ENCODE measurements at regions of chr3 and their contacts with region 1.

Region 1: GRCh38 chr3:119463171-119464169 is at the start of gene TMEM39A:
- DNase-seq: peak; percentile 98
- H3K4me3 Mint-ChIP-seq: peak within 1 kb of the TSS; percentile 98
- H3K27ac Mint-ChIP-seq: peak within 1 kb of the TSS; percentile 97
- H3K4me1 Mint-ChIP-seq: peaks cover 49% of the 10 kb centered on the region
- H3K27me3 Mint-ChIP-seq: peaks cover 3% of the 10 kb centered on the region
- total RNA-seq, gene TMEM39A: 51.3 and 56.9 TPM in 2 replicates

Region 2: GRCh38 chr3:119261055-119261454 is 202.4 kb before region 1 on chr3:
- intact Hi-C with region 1: no loop called
- DNase-seq: no peak
- H3K4me3 Mint-ChIP-seq: no peak overlapping the region
- H3K27ac Mint-ChIP-seq: no peak overlapping the region
- H3K4me1 Mint-ChIP-seq: peaks cover 14% of the 10 kb centered on the region
- H3K27me3 Mint-ChIP-seq: peaks cover 17% of the 10 kb centered on the region

Region 3: DNA sequence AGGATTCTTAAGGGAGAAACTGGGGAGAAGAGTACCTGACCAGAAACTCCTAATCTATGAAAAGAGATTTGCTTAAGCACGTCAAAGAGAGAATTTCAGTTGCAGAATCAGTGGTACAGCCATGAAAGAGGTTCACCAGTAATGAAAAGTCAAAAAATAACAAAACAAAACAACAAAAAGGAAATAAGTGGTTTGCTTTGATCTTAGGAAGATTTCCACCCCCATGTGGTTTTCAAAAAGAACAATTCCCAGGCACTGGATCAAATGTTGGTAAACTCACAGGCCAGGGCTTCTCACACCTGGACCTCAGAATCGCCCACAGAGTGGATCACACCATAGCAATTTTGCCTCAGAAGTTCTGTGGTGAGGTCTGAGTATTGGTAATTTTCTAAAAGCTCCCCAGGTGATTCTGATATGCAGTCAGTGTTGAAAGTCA is 67.5 kb before region 1 on chr3:
- intact Hi-C with region 1: loop called (anchors 2 kb)
- DNase-seq: peak; percentile 2
- H3K4me3 Mint-ChIP-seq: no peak overlapping the region
- H3K27ac Mint-ChIP-seq: peak overlapping the region; percentile 63
- H3K4me1 Mint-ChIP-seq: peaks cover 36% of the 10 kb centered on the region
- H3K27me3 Mint-ChIP-seq: peaks cover 9% of the 10 kb centered on the region

Region 4: DNA sequence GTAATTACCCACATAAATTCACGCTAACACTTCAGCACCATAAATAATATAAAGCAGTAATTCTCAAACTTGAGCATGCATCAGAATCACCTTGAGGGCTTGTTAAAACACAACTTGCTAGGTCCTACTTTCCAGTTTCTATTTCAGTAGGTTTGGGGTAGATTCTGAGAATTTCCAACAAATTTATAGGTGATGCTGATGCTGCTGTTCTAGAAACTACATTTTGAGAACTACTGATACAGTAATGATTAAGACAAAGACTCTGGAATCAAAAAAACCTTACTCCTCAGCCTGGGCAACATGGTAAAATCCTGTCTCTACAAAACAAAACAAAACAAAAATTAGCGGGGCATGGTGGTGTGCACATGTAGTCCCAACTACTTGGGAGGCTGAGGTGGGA is 18.9 kb before region 1 on chr3:
- intact Hi-C with region 1: loop called (anchors 2 kb)
- DNase-seq: no peak
- H3K4me3 Mint-ChIP-seq: peak overlapping the region; percentile 30
- H3K27ac Mint-ChIP-seq: no peak overlapping the region
- H3K4me1 Mint-ChIP-seq: peaks cover 14% of the 10 kb centered on the region
- H3K27me3 Mint-ChIP-seq: no peaks in the 10 kb centered on the region

Measured in activated T-helper 1 cell treated with anti-CD3 and anti-CD28 coated beads, Interleukin-12 subunit alpha, Interleukin-12 subunit beta, Interleukin-2, Interleukin-4 antibody, amounts not matched to agents 30 ng/mL and 10 ng/mL and 1 ng/mL, durations not matched to agents 14 hours and 24 hours and 36 hours (primary cell).